ENCODE measurements at regions of chr7 and their contacts with region 1.

Region 1: GRCh38 chr7:11831736-11832495 is at the start of gene THSD7A:
- DNase-seq: peak; percentile 81
- H3K4me3 Mint-ChIP-seq: peak within 1 kb of the TSS; percentile 88
- H3K27ac Mint-ChIP-seq: peak within 1 kb of the TSS; percentile 67
- H3K4me1 Mint-ChIP-seq: peaks cover 17% of the 10 kb centered on the region
- H3K27me3 Mint-ChIP-seq: no peaks in the 10 kb centered on the region
- CTCF ChIP-seq: peak; percentile 50
- total RNA-seq, gene THSD7A: 5.9 and 8.3 TPM in 2 replicates

Region 2: DNA sequence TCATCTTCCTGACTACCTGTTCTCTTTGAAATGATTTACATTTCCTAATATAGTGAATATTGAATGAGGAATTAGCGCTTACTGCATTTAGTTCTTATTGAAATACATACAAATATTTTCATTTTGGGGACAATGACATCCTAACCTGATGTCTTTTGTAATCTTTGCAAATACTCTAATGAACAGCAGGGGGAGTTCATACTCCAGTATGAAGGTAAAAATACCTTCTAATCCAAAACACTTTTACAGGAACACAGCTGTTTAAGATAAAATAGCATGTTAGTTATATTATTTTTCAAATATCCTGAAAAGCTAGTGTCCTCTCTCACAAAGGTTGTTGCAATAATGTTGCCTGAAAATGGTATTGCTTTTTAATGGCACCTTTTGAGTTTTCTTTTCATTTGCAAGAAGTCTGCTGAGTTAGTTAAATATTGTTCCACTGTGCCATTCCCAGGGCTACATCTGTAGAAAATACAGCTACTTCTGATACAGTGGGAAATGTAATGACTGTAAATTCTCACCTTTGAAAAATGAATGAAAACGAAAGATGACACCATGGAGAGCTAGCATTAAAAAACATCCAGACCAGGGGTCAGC is 458.3 kb before region 1 on chr7:
- CTCF ChIA-PET with region 1: no interaction called
- intact Hi-C with region 1: loop called (anchors 2 kb)
- DNase-seq: no peak
- H3K4me3 Mint-ChIP-seq: no peak overlapping the region
- H3K27ac Mint-ChIP-seq: no peak overlapping the region
- H3K4me1 Mint-ChIP-seq: peaks cover 9% of the 10 kb centered on the region
- H3K27me3 Mint-ChIP-seq: no peaks in the 10 kb centered on the region
- CTCF ChIP-seq: peak; percentile 65

Region 3: DNA sequence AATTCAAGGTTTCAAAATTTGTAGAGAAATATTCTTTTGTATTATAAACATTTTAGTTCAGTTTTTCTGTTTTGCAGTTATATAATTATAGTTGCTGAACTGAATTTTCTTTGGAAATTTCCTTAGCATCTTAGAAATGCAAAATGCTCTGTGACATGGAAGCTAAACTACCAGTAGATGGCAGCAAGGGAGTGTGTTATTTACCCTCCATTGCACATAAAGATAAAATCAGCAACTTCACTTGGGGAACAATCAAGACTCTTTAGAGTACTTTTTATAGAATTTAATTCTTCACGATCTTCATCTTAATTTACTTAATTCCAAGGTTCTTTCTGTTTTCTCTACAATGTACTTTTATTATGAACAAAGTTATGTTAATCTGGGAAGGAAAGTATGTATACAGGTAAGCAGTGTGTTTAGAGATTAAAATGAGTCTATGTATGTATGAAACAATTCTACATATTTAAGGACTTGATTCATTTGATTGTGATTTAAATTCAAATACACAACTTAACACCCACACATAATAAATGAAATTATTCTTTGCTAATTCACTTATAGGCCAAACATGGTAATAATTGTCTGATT is 404.1 kb before region 1 on chr7:
- CTCF ChIA-PET with region 1: interaction called, 3 read pairs
- intact Hi-C with region 1: loop called (anchors 1 kb)
- DNase-seq: peak; percentile 30
- H3K4me3 Mint-ChIP-seq: no peak overlapping the region
- H3K27ac Mint-ChIP-seq: no peak overlapping the region
- H3K4me1 Mint-ChIP-seq: no peaks in the 10 kb centered on the region
- H3K27me3 Mint-ChIP-seq: no peaks in the 10 kb centered on the region
- CTCF ChIP-seq: peak; percentile 65

Region 4: DNA sequence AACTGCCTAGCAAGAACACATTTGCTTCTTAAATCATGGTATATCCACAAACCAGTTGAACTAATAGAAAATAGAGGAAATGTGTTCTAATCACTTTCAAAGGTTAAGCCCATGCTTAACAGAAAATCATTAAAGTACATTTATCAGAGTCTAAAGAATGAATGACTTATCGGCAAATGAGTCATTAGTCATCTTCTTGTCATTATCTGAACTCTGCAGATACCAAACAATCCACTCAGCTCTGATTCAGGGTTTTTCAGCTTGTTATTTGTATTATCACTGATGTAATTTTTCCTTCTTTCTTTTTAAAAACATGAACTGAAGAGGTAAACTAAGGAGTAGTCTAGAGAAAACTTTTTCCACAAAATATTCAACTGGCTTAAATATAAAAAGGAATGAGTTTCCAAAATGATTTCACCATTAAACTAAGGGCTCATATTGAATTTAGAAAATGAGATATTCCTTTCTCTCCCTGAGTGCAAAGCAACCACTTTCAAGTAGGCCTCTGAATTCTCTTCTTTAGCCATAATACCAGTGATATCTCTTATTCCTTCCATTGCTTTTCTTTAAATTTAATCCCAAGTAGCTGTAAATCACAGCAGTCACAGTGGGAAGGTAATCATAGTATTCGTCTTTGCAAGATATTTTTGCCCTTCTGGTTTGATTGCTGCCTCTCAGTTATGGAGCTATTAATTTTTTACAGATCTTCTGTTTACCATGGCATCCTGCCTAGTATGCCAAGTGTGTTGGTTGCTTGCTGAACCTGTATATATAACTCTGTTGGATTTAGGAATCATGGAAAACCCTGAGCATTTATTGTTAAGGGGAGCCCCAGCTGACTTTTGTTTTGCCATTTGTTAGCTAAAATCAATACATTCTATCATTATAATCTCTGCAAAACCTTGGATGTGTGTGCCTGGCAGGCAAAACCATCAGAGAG is 125.0 kb before region 1 on chr7:
- CTCF ChIA-PET with region 1: no interaction called
- intact Hi-C with region 1: loop called (anchors 1 kb)
- DNase-seq: peak; percentile 59
- H3K4me3 Mint-ChIP-seq: peak overlapping the region; percentile 13
- H3K27ac Mint-ChIP-seq: peak overlapping the region; percentile 27
- H3K4me1 Mint-ChIP-seq: peaks cover 24% of the 10 kb centered on the region
- H3K27me3 Mint-ChIP-seq: no peaks in the 10 kb centered on the region
- CTCF ChIP-seq: no peak

Region 5: DNA sequence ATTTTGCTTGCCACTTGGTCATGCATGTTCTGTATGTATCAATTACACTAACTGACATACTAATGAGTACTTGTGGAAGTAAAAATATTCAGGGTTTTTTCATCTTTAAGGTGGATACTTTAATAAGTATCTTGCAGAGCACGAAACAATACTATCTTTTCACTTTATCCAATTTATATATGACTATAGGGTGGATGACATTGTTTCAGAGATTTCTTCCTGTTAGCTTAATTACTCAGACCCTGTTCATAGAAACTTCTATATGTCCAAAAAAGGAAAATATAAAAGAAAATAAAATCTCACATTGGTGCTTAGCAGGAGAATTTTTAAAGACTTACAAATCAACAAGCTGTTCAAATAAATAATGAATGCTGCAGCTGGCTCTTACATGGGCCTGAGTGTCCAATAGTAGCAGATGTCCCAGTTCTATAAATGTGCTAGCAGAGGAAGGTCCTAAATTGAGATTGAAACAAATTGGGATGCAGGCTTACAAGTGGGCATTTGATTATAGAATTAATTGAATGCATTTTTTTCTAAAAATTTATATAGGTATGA is 91.5 kb after region 1 on chr7:
- CTCF ChIA-PET with region 1: no interaction called
- intact Hi-C with region 1: no loop called
- DNase-seq: no peak
- H3K4me3 Mint-ChIP-seq: no peak overlapping the region
- H3K27ac Mint-ChIP-seq: no peak overlapping the region
- H3K4me1 Mint-ChIP-seq: no peaks in the 10 kb centered on the region
- H3K27me3 Mint-ChIP-seq: no peaks in the 10 kb centered on the region
- CTCF ChIP-seq: no peak

Region 6: GRCh38 chr7:12211054-12211710 is 379.3 kb after region 1 on chr7 and contains the start of gene TMEM106B:
- CTCF ChIA-PET with region 1: interaction called, 3 read pairs
- intact Hi-C with region 1: loop called (anchors 10 kb)
- DNase-seq: peak; percentile 99
- H3K4me3 Mint-ChIP-seq: peak within 1 kb of the TSS; percentile 85
- H3K27ac Mint-ChIP-seq: peak within 1 kb of the TSS; percentile 93
- H3K4me1 Mint-ChIP-seq: peaks cover 27% of the 10 kb centered on the region
- H3K27me3 Mint-ChIP-seq: no peaks in the 10 kb centered on the region
- CTCF ChIP-seq: no peak
- total RNA-seq, gene TMEM106B: 76.7 and 81.5 TPM in 2 replicates

Region 7: GRCh38 chr7:12322284-12322902 is 490.5 kb after region 1 on chr7:
- CTCF ChIA-PET with region 1: interaction called, 4 read pairs
- intact Hi-C with region 1: loop called (anchors 1 kb)
- DNase-seq: peak; percentile 21
- H3K4me3 Mint-ChIP-seq: no peak overlapping the region
- H3K27ac Mint-ChIP-seq: no peak overlapping the region
- H3K4me1 Mint-ChIP-seq: peaks cover 11% of the 10 kb centered on the region
- H3K27me3 Mint-ChIP-seq: no peaks in the 10 kb centered on the region
- CTCF ChIP-seq: peak; percentile 74